Activated B cell treated with CpG ODN at 0.5 μM for 24 hours (primary cell): ENCODE measurements at regions of chr16 and their contacts with region 1.

Region 1: DNA sequence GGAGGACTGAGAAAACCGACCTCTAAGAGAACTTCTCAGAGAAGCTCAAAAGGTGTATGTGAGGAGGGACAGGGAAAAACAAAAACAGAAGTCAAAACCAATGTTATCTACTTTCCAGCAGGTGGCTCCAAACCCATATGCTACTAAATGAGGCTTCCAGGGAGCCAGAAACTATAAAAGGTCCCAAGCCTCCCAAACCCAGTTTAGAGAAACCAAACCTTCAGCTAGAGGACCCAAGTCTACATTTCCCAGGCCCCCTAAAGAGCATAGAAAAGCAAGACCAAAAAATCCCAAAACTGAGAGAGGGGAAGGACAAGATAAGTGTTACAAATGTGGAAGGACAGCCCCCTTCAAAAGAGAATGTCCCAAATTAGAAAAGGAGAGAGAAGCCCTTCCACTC is 3.7 kb downstream of the HPR start:
- DNase-seq: no peak
- ATAC-seq: no peak
- H3K4me3 Mint-ChIP-seq: no peak overlapping the region
- H3K27ac Mint-ChIP-seq: no peak overlapping the region
- H3K4me1 Mint-ChIP-seq: no peaks in the 10 kb centered on the region
- H3K27me3 Mint-ChIP-seq: no peaks in the 10 kb centered on the region
- CTCF ChIP-seq: no peak

Region 2: DNA sequence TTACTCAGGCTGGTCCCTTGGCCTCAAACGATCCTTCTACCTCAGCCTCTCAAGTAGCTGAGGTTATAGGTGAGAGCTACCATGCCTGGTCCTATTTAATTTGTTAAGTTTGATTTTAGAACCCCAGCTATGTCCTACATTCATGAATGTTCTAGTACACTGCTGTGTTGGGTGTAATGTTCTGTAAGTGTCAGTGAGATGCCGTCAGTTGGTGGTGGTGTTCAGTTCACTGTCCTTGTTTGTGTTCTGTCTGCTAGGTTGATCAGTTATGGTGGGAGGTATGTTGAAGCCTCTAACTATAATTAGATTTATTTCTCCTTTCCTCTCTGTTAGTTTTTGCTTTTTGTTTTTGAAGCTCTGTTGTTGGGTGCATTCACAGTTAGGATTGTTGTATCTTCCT is 163.1 kb before region 1 on chr16:
- CTCF ChIA-PET with region 1: no interaction called
- POLR2A ChIA-PET with region 1: no interaction called
- intact Hi-C with region 1: no loop called
- DNase-seq: no peak
- ATAC-seq: no peak
- H3K4me3 Mint-ChIP-seq: no peak overlapping the region
- H3K27ac Mint-ChIP-seq: no peak overlapping the region
- H3K4me1 Mint-ChIP-seq: peaks cover 75% of the 10 kb centered on the region
- H3K27me3 Mint-ChIP-seq: no peaks in the 10 kb centered on the region
- CTCF ChIP-seq: no peak

Region 3: DNA sequence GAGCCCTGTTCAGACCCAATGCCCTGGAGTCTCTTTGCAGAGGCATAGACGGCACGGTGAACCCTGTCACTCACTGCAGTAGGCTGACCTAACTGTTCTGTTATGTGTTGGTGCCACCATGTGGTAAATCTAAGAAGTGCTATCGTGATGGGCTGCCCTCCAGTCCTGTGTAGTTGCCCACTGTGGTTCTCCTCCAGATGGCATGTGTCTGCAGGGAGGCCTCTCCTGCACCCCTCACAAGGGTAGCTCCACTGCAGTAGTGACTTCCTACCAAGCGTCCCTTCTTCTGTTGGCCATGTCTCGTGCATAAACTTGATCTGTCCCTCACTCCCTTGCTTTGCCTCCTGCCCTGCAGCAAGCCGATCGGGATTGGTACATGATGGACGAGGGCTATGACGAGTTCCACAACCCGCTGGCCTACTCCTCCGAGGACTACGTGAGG is 32.7 kb after region 1 on chr16:
- CTCF ChIA-PET with region 1: interaction called, 5 read pairs
- POLR2A ChIA-PET with region 1: no interaction called
- intact Hi-C with region 1: loop called (anchors 1 kb)
- DNase-seq: no peak
- ATAC-seq: peak; percentile 97
- H3K4me3 Mint-ChIP-seq: no peak overlapping the region
- H3K27ac Mint-ChIP-seq: no peak overlapping the region
- H3K4me1 Mint-ChIP-seq: peaks cover 33% of the 10 kb centered on the region
- H3K27me3 Mint-ChIP-seq: no peaks in the 10 kb centered on the region
- CTCF ChIP-seq: no peak

Region 4: GRCh38 chr16:72517154-72517553 is 450.4 kb after region 1 on chr16:
- CTCF ChIA-PET with region 1: no interaction called
- POLR2A ChIA-PET with region 1: no interaction called
- intact Hi-C with region 1: no loop called
- DNase-seq: no peak
- ATAC-seq: no peak
- H3K4me3 Mint-ChIP-seq: no peak overlapping the region
- H3K27ac Mint-ChIP-seq: no peak overlapping the region
- H3K4me1 Mint-ChIP-seq: no peaks in the 10 kb centered on the region
- H3K27me3 Mint-ChIP-seq: no peaks in the 10 kb centered on the region
- CTCF ChIP-seq: no peak

Region 5: DNA sequence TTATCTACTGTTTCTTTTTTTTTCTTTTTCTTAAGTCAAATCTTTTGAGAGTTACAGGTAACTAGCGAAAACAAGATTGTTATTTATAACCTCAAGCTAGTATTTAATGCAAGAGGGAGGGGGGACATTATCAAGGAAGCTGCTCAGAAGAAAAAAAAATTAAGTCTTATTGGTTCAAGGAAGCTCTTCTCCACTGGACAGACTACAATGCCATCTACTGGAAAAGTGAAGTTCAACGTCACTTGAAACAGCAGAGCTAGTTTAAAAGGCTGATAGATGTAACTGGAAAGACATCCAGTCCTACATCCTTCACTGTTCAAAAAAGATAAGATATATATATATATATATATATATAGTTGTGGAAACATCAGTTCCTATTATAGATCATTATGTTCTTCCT is 1811.9 kb after region 1 on chr16:
- CTCF ChIA-PET with region 1: no interaction called
- POLR2A ChIA-PET with region 1: no interaction called
- intact Hi-C with region 1: loop called (anchors 5 kb)
- DNase-seq: no peak
- ATAC-seq: no peak
- H3K4me3 Mint-ChIP-seq: no peak overlapping the region
- H3K27ac Mint-ChIP-seq: no peak overlapping the region
- H3K4me1 Mint-ChIP-seq: no peaks in the 10 kb centered on the region
- H3K27me3 Mint-ChIP-seq: peaks cover under 1% of the 10 kb centered on the region
- CTCF ChIP-seq: no peak